Mammary epithelial cell (primary cell): ENCODE measurements at regions of chr6 and their contacts with region 1.

Region 1: DNA sequence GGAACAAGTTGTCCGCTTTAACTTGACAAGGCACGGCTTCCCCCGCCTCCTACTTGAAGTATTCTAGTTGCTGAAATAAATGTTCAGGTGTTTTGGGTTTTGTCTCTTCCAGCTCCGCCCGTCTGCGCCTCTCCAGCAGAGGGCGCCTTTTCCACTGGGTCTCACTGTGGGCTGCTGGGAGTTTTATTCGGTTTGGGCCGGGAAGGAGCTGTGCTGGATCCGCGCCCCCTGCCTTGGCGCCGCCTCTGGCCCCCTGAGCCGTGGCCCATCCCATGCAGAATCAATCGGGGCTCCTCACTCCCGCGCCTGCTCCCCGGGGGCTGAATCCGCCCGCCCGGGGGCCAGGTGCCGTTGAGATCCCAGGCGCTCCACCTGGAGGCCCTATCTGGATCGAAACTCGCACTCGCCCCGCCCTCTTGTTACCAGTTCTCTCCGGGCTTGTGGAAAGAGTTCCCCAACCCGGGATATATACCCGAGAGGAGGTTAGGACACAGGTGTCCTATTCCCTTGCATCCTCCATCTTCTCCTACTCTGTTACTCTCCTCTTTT is 51.0 kb upstream of the TCF21 start:
- DNase-seq: peak; percentile 69
- H3K4me3 ChIP-seq: peak overlapping the region; percentile 46 to 76 (median 62)
- H3K27ac ChIP-seq: peak overlapping the region; percentile 38
- H3K4me1 ChIP-seq: peaks cover 3% of the 10 kb centered on the region
- H3K27me3 ChIP-seq: no peaks in the 10 kb centered on the region
- CTCF ChIP-seq: peak; percentile 82 to 93

Region 2: DNA sequence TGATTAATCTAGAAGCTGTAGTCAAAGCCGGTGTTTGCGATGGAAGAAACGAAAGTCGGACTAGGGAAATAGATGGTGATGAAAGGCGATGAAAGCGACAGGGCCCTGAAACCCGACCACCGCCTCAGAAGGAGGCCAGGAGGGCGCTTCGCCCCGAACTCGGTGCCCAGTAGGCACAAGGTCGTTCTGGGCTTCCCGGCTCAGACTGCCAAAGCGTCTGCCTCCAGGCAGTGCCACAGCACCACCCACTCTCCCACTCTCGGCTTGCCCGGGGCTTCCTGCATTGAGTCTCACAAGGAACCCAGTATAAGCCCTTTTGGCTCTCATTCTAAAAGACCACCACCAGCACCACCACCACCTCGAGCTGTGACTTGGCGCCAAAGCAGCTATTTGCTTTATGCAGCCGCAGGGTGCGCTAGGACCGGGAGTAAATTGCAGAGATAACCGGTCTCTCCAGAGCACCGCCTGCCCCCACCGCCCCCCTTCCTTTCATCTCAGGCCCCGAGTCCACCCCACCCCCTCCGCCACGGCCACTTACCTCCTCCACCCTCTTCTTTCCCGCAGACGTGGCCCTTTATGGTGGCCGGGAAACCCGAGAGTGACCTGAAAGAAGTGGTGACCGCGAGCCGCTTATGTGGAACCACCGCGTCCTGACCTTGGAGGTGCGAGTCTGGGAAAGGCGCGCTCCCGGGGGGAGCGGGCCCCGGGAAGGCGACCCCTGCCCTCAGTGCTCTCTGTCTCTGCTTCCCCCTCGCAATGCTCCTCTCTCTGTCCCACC is 53.5 kb after region 1 on chr6:
- CTCF ChIA-PET with region 1: interaction called, 3 read pairs
- dilution Hi-C with region 1: no loop called
- in situ Hi-C with region 1: loop called in 1 of 2 experiments (anchors 10 kb)
- intact Hi-C with region 1: no loop called
- DNase-seq: no peak
- H3K4me3 ChIP-seq: no peak overlapping the region
- H3K27ac ChIP-seq: no peak overlapping the region
- H3K4me1 ChIP-seq: no peaks in the 10 kb centered on the region
- H3K27me3 ChIP-seq: peaks cover 75% of the 10 kb centered on the region
- CTCF ChIP-seq: no peak

Region 3: DNA sequence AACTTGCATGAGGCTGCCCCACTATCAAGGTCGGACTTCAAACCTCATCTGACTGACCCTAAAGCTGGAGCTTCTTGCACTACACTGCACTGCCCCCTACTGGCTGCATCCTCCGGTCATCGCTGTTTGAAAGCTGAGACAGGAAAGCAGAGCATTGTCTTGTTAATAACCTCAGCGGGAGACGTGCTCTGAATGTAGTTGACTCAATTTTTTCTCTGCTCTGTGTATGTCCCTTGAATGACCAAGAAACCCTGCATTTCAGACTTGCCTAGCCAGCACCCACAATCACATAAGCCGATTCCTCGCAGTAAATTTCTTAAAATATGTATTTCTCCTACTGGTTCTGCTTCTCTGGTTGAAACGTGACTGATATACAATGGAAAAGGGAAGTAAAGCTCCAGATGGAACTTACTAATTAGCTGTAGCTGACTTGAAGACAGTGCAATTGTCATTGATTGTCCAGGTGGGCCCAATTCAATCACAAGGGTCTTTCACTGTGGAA is 78.8 kb after region 1 on chr6:
- CTCF ChIA-PET with region 1: interaction called, 21 read pairs
- dilution Hi-C with region 1: no loop called
- in situ Hi-C with region 1: loop called (anchors 5 kb)
- intact Hi-C with region 1: loop called (anchors 1 kb)
- DNase-seq: peak; percentile 63
- H3K4me3 ChIP-seq: no peak overlapping the region
- H3K27ac ChIP-seq: no peak overlapping the region
- H3K4me1 ChIP-seq: no peaks in the 10 kb centered on the region
- H3K27me3 ChIP-seq: no peaks in the 10 kb centered on the region
- CTCF ChIP-seq: peak; percentile 93 to 96

Region 4: DNA sequence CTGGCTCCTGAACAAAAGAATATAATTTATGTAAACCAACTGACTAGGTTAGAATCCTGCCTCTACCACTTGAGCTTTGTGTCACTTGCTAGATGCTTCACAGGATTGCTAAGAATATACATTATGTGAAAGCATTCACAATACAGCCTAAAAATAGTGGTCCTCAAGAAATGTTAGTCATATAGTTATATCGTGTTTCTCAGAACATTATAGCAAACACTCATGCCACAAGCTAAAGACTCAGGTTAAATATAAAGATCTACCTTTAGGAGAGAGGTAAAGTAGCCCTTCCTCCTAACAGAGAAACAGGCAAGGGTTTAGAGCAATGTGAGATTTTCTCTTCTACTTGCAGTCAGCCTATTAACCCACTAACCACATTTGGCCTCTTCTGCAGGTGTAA is 1129.8 kb after region 1 on chr6:
- CTCF ChIA-PET with region 1: no interaction called
- dilution Hi-C with region 1: no loop called
- in situ Hi-C with region 1: no loop called
- intact Hi-C with region 1: no loop called
- DNase-seq: no peak
- H3K4me3 ChIP-seq: no peak overlapping the region
- H3K27ac ChIP-seq: no peak overlapping the region
- H3K4me1 ChIP-seq: peaks cover 18% of the 10 kb centered on the region
- H3K27me3 ChIP-seq: no peaks in the 10 kb centered on the region
- CTCF ChIP-seq: no peak